ENCODE measurements at regions of chr18 and their contacts with region 1.

Region 1: DNA sequence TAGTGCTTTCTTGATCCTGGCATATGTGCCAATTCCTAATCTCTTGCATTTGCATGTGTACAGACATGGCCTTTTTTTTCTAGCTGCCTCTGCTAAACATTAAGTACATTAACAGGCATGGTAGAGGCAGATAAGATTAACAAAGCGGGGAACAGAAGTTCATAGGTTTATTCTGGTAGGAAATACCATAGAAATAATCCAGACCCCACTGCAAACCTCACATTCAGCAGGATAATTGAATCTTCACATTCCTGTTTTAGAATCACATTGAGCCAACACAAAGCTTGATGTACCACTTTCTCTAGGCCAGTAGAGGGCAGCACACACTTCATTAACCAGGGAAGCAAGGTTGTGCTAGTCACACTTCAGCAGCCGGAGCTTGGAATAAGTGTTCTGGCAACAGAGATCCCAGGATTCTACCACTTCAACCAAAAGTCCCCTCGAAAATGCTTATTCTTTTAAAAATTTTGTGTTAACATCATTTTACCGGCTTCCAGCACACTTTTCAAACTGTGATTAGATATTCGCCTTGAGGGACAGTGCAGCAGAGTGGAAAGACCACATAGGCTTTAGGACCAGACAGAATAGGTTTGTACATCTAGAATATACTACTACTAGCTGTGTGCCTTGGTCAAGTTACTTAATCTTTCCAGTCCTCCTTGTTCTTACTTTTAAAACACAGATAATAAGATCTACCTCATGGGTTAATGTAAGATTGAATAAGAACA is 420.2 kb upstream of the CHST9 start:
- DNase-seq: peak in 1 of 2 experiments; percentile 62
- H3K4me3 ChIP-seq: no peak overlapping the region
- H3K27ac ChIP-seq: no peak overlapping the region
- H3K4me1 ChIP-seq: peaks cover 0 to 6% (median 3%) of the 10 kb centered on the region in 4 experiments; a peak in 3 of 7 replicates
- H3K27me3 ChIP-seq: no peaks in the 10 kb centered on the region
- CTCF ChIP-seq: peak; percentile 29 to 91 (median 79)
- EP300 ChIP-seq: no peak
- POLR2A ChIP-seq: no peak
- RAD21 ChIP-seq: peak; percentile 91 to 94

Region 2: DNA sequence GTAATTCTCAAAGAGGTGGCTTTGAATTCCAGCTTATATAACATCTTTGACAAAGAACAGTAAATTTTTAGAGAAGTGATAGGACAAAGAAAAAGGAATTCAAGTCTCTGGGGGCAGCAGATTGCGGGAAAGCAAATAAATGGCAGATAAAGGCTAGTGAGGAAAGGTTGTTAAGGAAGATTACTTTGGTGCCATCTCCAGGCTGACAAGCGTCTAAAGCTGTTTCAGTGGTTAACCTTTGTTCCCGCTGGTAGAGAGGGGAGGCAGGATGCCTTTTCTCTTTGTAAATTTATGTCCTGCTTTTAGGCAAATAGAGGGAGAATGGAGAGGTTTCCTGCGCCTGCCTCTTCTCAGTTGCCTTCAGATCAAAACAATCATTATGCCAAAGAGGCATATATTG is 11.1 kb after region 1 on chr18:
- CTCF ChIA-PET with region 1: interaction called, 34 read pairs
- POLR2A ChIA-PET with region 1: no interaction called
- DNase-seq: no peak
- H3K4me3 ChIP-seq: no peak overlapping the region
- H3K27ac ChIP-seq: no peak overlapping the region
- H3K4me1 ChIP-seq: no peaks in the 10 kb centered on the region; a peak in 2 of 7 replicates
- H3K27me3 ChIP-seq: no peaks in the 10 kb centered on the region
- CTCF ChIP-seq: peak in 1 of 3 experiments; percentile 3; a peak in 1 of 4 replicates
- EP300 ChIP-seq: no peak
- POLR2A ChIP-seq: no peak
- RAD21 ChIP-seq: peak; percentile 9 to 26; a peak in 2 of 4 replicates

Region 3: GRCh38 chr18:27621236-27621890 is 16.1 kb after region 1 on chr18:
- CTCF ChIA-PET with region 1: interaction called, 34 read pairs
- POLR2A ChIA-PET with region 1: no interaction called
- DNase-seq: no peak
- H3K4me3 ChIP-seq: no peak overlapping the region
- H3K27ac ChIP-seq: no peak overlapping the region
- H3K4me1 ChIP-seq: no peaks in the 10 kb centered on the region
- H3K27me3 ChIP-seq: no peaks in the 10 kb centered on the region
- CTCF ChIP-seq: no peak
- EP300 ChIP-seq: no peak
- POLR2A ChIP-seq: no peak
- RAD21 ChIP-seq: no peak

Region 4: GRCh38 chr18:27627927-27628326 is 22.7 kb after region 1 on chr18:
- CTCF ChIA-PET with region 1: interaction called, 22 read pairs
- POLR2A ChIA-PET with region 1: no interaction called
- DNase-seq: no peak
- H3K4me3 ChIP-seq: no peak overlapping the region
- H3K27ac ChIP-seq: no peak overlapping the region
- H3K4me1 ChIP-seq: no peaks in the 10 kb centered on the region
- H3K27me3 ChIP-seq: no peaks in the 10 kb centered on the region
- CTCF ChIP-seq: peak; percentile 27 to 54 (median 43); a peak in 3 of 4 replicates
- EP300 ChIP-seq: no peak
- POLR2A ChIP-seq: no peak
- RAD21 ChIP-seq: peak; percentile 45 to 53

Region 5: DNA sequence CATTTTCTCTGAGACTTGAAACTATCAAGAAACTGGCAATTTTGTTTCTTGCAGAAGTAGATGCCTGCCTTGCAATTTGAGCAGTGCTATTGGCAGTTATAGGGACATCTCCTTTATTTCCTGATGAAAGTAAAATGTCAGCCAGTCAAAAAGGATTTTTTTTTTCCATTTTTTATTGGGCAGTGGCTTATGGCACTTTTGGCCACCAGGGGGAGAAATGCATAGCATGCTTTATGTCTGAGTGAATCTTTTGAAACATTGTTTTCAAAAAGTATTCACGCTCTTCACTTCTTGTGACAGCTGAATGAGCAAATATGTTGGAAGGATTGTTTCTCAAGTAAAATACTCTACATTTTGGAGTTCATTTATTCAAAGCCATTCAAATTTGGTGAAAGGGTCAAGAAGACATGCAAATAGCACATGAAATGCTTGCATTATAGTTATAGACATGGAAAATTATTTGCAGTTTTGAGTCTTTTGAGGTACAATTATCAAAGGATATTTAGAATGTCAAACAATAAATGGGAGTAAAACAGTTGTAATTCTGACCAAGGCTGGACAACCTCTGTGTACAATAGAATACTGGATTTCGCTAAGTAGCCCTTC is 80.6 kb after region 1 on chr18:
- CTCF ChIA-PET with region 1: interaction called, 17 read pairs
- POLR2A ChIA-PET with region 1: no interaction called
- DNase-seq: no peak
- H3K4me3 ChIP-seq: no peak overlapping the region
- H3K27ac ChIP-seq: no peak overlapping the region
- H3K4me1 ChIP-seq: no peaks in the 10 kb centered on the region
- H3K27me3 ChIP-seq: no peaks in the 10 kb centered on the region
- CTCF ChIP-seq: peak in 2 of 3 experiments; percentile 48 to 63; a peak in 3 of 4 replicates
- EP300 ChIP-seq: no peak
- POLR2A ChIP-seq: no peak
- RAD21 ChIP-seq: peak; percentile 53 to 62

Region 6: GRCh38 chr18:27728659-27729058 is 123.4 kb after region 1 on chr18:
- CTCF ChIA-PET with region 1: no interaction called
- POLR2A ChIA-PET with region 1: no interaction called
- DNase-seq: no peak
- H3K4me3 ChIP-seq: no peak overlapping the region
- H3K27ac ChIP-seq: no peak overlapping the region
- H3K4me1 ChIP-seq: peaks cover 0 to 2% (median 0%) of the 10 kb centered on the region in 4 experiments; a peak in 1 of 7 replicates
- H3K27me3 ChIP-seq: no peaks in the 10 kb centered on the region
- CTCF ChIP-seq: no peak
- EP300 ChIP-seq: no peak
- POLR2A ChIP-seq: no peak
- RAD21 ChIP-seq: no peak

Region 7: GRCh38 chr18:27762054-27762453 is 156.8 kb after region 1 on chr18:
- CTCF ChIA-PET with region 1: interaction called, 49 read pairs
- POLR2A ChIA-PET with region 1: no interaction called
- DNase-seq: no peak
- H3K4me3 ChIP-seq: no peak overlapping the region
- H3K27ac ChIP-seq: no peak overlapping the region
- H3K4me1 ChIP-seq: peaks cover 0 to 10% (median 1%) of the 10 kb centered on the region in 4 experiments; a peak in 1 of 7 replicates
- H3K27me3 ChIP-seq: no peaks in the 10 kb centered on the region
- CTCF ChIP-seq: no peak
- EP300 ChIP-seq: no peak
- POLR2A ChIP-seq: no peak
- RAD21 ChIP-seq: no peak